ENCODE measurements at regions of chr2 and their contacts with region 1.

Region 1: GRCh38 chr2:102753563-102754159 is 8.2 kb upstream of the TMEM182 start:
- DNase-seq: no peak
- ATAC-seq: peak; percentile 68
- H3K4me3 ChIP-seq: no peak overlapping the region
- H3K27ac ChIP-seq: no peak overlapping the region
- H3K4me1 ChIP-seq: peaks cover 6% of the 10 kb centered on the region
- H3K27me3 ChIP-seq: no peaks in the 10 kb centered on the region
- CTCF ChIP-seq: peak; percentile 56 to 72 (median 66)
- EP300 ChIP-seq: no peak
- POLR2A ChIP-seq: no peak
- RAD21 ChIP-seq: peak; percentile 47

Region 2: GRCh38 chr2:102208774-102209173 is 544.9 kb before region 1 on chr2:
- CTCF ChIA-PET with region 1: no interaction called
- POLR2A ChIA-PET with region 1: no interaction called
- RAD21 ChIA-PET with region 1: no interaction called
- SMC1A ChIA-PET with region 1: no interaction called
- in situ Hi-C with region 1: no loop called
- intact Hi-C with region 1: no loop called
- DNase-seq: no peak
- ATAC-seq: no peak
- H3K4me3 ChIP-seq: no peak overlapping the region
- H3K27ac ChIP-seq: no peak overlapping the region
- H3K4me1 ChIP-seq: no peaks in the 10 kb centered on the region
- H3K27me3 ChIP-seq: no peaks in the 10 kb centered on the region
- CTCF ChIP-seq: no peak
- EP300 ChIP-seq: no peak
- POLR2A ChIP-seq: no peak
- RAD21 ChIP-seq: no peak

Region 3: GRCh38 chr2:102736410-102737409 is 17.0 kb before region 1 on chr2:
- CTCF ChIA-PET with region 1: interaction called, 130 read pairs
- POLR2A ChIA-PET with region 1: interaction called, 4 read pairs
- RAD21 ChIA-PET with region 1: no interaction called
- SMC1A ChIA-PET with region 1: interaction called, 14 read pairs
- in situ Hi-C with region 1: no loop called
- intact Hi-C with region 1: no loop called
- DNase-seq: no peak
- ATAC-seq: peak; percentile 96
- H3K4me3 ChIP-seq: peak overlapping the region; percentile 97
- H3K27ac ChIP-seq: peak overlapping the region; percentile 68
- H3K4me1 ChIP-seq: peaks cover 14% of the 10 kb centered on the region
- H3K27me3 ChIP-seq: no peaks in the 10 kb centered on the region
- CTCF ChIP-seq: no peak
- EP300 ChIP-seq: no peak
- POLR2A ChIP-seq: peak; percentile 90
- RAD21 ChIP-seq: no peak

Region 4: DNA sequence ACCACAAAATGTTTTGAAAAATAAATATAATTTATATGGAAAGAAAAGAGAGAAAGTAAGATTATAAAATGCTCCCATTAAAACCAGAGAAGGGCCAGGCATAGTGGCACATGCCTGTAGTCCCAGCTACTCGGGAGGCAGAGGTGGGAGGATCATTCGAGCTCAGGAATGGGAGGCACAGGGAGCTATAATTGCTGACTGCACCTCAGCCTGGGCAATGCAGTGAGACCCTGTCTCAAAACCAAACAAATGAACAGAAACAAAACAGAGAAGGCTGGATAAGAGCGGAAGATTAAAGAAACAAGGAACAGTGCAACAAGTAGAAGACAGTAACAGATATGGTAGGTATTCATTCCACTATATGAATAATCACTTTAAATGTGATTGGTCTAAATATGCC is 10.4 kb before region 1 on chr2:
- CTCF ChIA-PET with region 1: interaction called, 130 read pairs
- POLR2A ChIA-PET with region 1: no interaction called
- RAD21 ChIA-PET with region 1: no interaction called
- SMC1A ChIA-PET with region 1: interaction called, 14 read pairs
- in situ Hi-C with region 1: no loop called
- intact Hi-C with region 1: no loop called
- DNase-seq: no peak
- ATAC-seq: no peak
- H3K4me3 ChIP-seq: no peak overlapping the region
- H3K27ac ChIP-seq: no peak overlapping the region
- H3K4me1 ChIP-seq: no peaks in the 10 kb centered on the region
- H3K27me3 ChIP-seq: no peaks in the 10 kb centered on the region
- CTCF ChIP-seq: no peak
- EP300 ChIP-seq: no peak
- POLR2A ChIP-seq: no peak
- RAD21 ChIP-seq: no peak

Region 5: DNA sequence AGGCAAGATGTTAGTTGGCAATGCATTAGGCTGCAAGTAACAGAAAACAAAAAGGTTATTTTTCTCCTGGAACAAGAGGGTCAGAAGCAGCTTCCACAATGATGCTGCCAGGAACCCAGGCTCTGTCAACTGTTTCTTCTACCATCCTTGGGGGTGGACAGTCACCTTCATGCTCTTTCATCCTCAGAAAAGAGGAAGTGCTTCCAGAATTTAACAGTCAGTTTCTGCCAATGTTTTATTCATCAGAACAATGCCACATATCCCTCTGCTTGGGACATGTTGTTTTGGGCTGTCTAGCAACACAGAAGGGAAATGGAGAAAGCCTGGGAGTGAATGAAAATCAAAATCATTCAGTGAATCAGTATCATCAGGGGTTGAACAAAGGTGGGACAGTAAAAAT is 15.2 kb after region 1 on chr2:
- CTCF ChIA-PET with region 1: interaction called, 95 read pairs
- POLR2A ChIA-PET with region 1: interaction called, 3 read pairs
- RAD21 ChIA-PET with region 1: interaction called, 3 read pairs
- SMC1A ChIA-PET with region 1: interaction called, 7 read pairs
- in situ Hi-C with region 1: no loop called
- intact Hi-C with region 1: no loop called
- DNase-seq: no peak
- ATAC-seq: no peak
- H3K4me3 ChIP-seq: no peak overlapping the region
- H3K27ac ChIP-seq: no peak overlapping the region
- H3K4me1 ChIP-seq: no peaks in the 10 kb centered on the region
- H3K27me3 ChIP-seq: no peaks in the 10 kb centered on the region
- CTCF ChIP-seq: no peak
- EP300 ChIP-seq: no peak
- POLR2A ChIP-seq: no peak
- RAD21 ChIP-seq: no peak

Region 6: GRCh38 chr2:102778260-102778659 is 24.6 kb after region 1 on chr2:
- CTCF ChIA-PET with region 1: interaction called, 11 read pairs
- POLR2A ChIA-PET with region 1: no interaction called
- RAD21 ChIA-PET with region 1: no interaction called
- SMC1A ChIA-PET with region 1: no interaction called
- in situ Hi-C with region 1: no loop called
- intact Hi-C with region 1: no loop called
- DNase-seq: no peak
- ATAC-seq: no peak
- H3K4me3 ChIP-seq: no peak overlapping the region
- H3K27ac ChIP-seq: no peak overlapping the region
- H3K4me1 ChIP-seq: no peaks in the 10 kb centered on the region
- H3K27me3 ChIP-seq: no peaks in the 10 kb centered on the region
- CTCF ChIP-seq: no peak
- EP300 ChIP-seq: no peak
- POLR2A ChIP-seq: no peak
- RAD21 ChIP-seq: no peak

Region 7: GRCh38 chr2:102796337-102796736 is 42.7 kb after region 1 on chr2:
- CTCF ChIA-PET with region 1: interaction called, 11 read pairs
- POLR2A ChIA-PET with region 1: no interaction called
- RAD21 ChIA-PET with region 1: no interaction called
- SMC1A ChIA-PET with region 1: interaction called, 3 read pairs
- in situ Hi-C with region 1: no loop called
- intact Hi-C with region 1: no loop called
- DNase-seq: no peak
- ATAC-seq: no peak
- H3K4me3 ChIP-seq: no peak overlapping the region
- H3K27ac ChIP-seq: no peak overlapping the region
- H3K4me1 ChIP-seq: no peaks in the 10 kb centered on the region
- H3K27me3 ChIP-seq: no peaks in the 10 kb centered on the region
- CTCF ChIP-seq: no peak
- EP300 ChIP-seq: no peak
- POLR2A ChIP-seq: no peak
- RAD21 ChIP-seq: no peak

Region 8: GRCh38 chr2:102806250-102806837 is 52.7 kb after region 1 on chr2:
- CTCF ChIA-PET with region 1: interaction called, 101 read pairs
- POLR2A ChIA-PET with region 1: no interaction called
- RAD21 ChIA-PET with region 1: interaction called, 34 read pairs
- SMC1A ChIA-PET with region 1: interaction called, 44 read pairs
- in situ Hi-C with region 1: no loop called
- intact Hi-C with region 1: loop called (anchors 1 kb)
- DNase-seq: no peak
- ATAC-seq: peak; percentile 83
- H3K4me3 ChIP-seq: no peak overlapping the region
- H3K27ac ChIP-seq: no peak overlapping the region
- H3K4me1 ChIP-seq: peaks cover 3% of the 10 kb centered on the region
- H3K27me3 ChIP-seq: no peaks in the 10 kb centered on the region
- CTCF ChIP-seq: peak; percentile 85 to 90 (median 86)
- EP300 ChIP-seq: no peak
- POLR2A ChIP-seq: no peak
- RAD21 ChIP-seq: peak; percentile 77

Region 9: GRCh38 chr2:102826904-102827303 is 73.2 kb after region 1 on chr2:
- CTCF ChIA-PET with region 1: no interaction called
- POLR2A ChIA-PET with region 1: no interaction called
- RAD21 ChIA-PET with region 1: no interaction called
- SMC1A ChIA-PET with region 1: no interaction called
- in situ Hi-C with region 1: no loop called
- intact Hi-C with region 1: no loop called
- DNase-seq: no peak
- ATAC-seq: no peak
- H3K4me3 ChIP-seq: no peak overlapping the region
- H3K27ac ChIP-seq: no peak overlapping the region
- H3K4me1 ChIP-seq: no peaks in the 10 kb centered on the region
- H3K27me3 ChIP-seq: no peaks in the 10 kb centered on the region
- CTCF ChIP-seq: no peak
- EP300 ChIP-seq: no peak
- POLR2A ChIP-seq: no peak
- RAD21 ChIP-seq: no peak

Region 10: GRCh38 chr2:102992607-102993006 is 238.9 kb after region 1 on chr2:
- CTCF ChIA-PET with region 1: no interaction called
- POLR2A ChIA-PET with region 1: no interaction called
- RAD21 ChIA-PET with region 1: no interaction called
- SMC1A ChIA-PET with region 1: no interaction called
- in situ Hi-C with region 1: no loop called
- intact Hi-C with region 1: no loop called
- DNase-seq: no peak
- ATAC-seq: no peak
- H3K4me3 ChIP-seq: no peak overlapping the region
- H3K27ac ChIP-seq: no peak overlapping the region
- H3K4me1 ChIP-seq: no peaks in the 10 kb centered on the region
- H3K27me3 ChIP-seq: no peaks in the 10 kb centered on the region
- CTCF ChIP-seq: no peak
- EP300 ChIP-seq: no peak
- POLR2A ChIP-seq: no peak
- RAD21 ChIP-seq: no peak

Measured in GM12878 (cell line).